Calu3 (cell line): ENCODE measurements at regions of chr14 and their contacts with region 1.

Region 1: DNA sequence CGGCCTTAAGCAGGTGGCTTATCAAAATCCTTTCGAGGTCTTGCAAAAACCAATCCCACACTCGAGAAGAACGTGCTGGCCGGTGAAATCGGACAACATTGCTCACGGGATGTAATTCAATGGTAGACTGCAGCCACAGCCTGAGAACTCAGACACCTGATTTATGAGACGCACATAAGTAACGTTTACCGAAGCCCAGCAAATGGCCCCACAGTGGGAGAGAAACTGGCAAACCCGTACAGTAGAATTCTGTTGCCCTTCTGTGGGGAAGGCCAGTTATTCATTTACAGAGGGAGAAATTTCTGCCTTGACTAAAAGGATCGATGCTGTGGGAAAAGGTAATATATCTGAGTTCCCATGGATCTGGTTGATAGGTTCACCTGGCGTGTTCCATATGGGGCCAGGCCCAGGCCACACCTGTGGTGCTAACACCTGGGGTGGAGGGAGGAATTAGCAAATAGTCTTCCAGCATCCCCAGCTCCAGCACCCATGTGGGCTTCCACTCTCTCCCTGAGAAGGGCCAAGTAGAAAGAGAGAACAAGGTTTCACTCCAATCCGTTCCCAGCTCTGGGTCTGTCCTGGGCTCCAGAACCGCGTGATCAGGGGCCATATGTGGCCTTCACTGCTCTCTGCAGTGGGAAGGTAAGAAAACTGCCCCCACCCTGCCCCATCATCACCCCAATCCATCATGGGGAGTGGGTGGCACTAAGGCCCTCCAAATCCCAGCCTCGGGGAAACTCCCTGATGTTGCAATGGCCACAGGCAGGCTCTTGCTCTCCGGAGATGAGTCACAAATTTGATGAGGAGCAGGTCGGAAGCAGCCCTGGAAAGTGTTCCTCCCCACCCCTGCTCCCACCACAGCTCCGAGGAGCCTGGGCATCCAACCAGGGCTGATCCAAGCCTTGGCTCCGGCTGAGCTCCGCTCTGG is 12.7 kb downstream of the BDKRB1 start:
- DNase-seq: peak; percentile 66
- H3K4me3 Mint-ChIP-seq: peak overlapping the region; percentile 44
- H3K27ac Mint-ChIP-seq: peak overlapping the region; percentile 53
- H3K4me1 Mint-ChIP-seq: peaks cover 41% of the 10 kb centered on the region
- H3K27me3 Mint-ChIP-seq: no peaks in the 10 kb centered on the region
- CTCF ChIP-seq: no peak

Region 2: GRCh38 chr14:96204151-96205058 is 64.3 kb before region 1 on chr14 and contains the start of gene BDKRB2:
- CTCF ChIA-PET with region 1: no interaction called
- intact Hi-C with region 1: loop called (anchors 5 kb)
- DNase-seq: peak; percentile 72
- H3K4me3 Mint-ChIP-seq: peak within 1 kb of the TSS; percentile 63
- H3K27ac Mint-ChIP-seq: peak within 1 kb of the TSS; percentile 45
- H3K4me1 Mint-ChIP-seq: peaks cover 16% of the 10 kb centered on the region
- H3K27me3 Mint-ChIP-seq: peaks cover 40% of the 10 kb centered on the region
- CTCF ChIP-seq: no peak
- total RNA-seq, gene BDKRB2: 0.27 and 0.28 TPM in 2 replicates